Dorsolateral prefrontal cortex (tissue), 120 donors: ENCODE measurements at regions of chr5 and their contacts with region 1.

Region 1: DNA sequence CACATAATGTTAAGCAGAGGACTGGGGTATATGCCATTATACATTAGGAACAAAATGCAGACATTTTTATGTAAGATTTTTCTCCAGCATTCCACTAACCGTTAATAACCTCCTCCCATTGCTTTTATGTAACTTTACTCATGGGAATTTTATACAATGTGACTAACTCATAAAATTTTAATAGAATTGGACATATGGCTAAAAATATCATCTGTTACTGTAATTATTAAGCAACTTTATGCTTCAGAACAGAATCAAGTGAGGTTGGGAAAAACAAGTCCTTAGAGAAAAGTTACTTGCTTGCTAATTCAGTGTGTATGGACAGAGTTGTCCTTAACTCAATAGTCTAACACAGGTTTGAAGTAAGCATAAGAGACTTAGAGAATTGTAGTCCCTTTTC is 54.8 kb upstream of the PCSK1 start:
- DNase-seq: no peak
- H3K4me3 ChIP-seq: no peak overlapping the region
- H3K27ac ChIP-seq: no peak overlapping the region
- H3K27me3 ChIP-seq: no peaks in the 10 kb centered on the region
- CTCF ChIP-seq: no peak

Region 2: DNA sequence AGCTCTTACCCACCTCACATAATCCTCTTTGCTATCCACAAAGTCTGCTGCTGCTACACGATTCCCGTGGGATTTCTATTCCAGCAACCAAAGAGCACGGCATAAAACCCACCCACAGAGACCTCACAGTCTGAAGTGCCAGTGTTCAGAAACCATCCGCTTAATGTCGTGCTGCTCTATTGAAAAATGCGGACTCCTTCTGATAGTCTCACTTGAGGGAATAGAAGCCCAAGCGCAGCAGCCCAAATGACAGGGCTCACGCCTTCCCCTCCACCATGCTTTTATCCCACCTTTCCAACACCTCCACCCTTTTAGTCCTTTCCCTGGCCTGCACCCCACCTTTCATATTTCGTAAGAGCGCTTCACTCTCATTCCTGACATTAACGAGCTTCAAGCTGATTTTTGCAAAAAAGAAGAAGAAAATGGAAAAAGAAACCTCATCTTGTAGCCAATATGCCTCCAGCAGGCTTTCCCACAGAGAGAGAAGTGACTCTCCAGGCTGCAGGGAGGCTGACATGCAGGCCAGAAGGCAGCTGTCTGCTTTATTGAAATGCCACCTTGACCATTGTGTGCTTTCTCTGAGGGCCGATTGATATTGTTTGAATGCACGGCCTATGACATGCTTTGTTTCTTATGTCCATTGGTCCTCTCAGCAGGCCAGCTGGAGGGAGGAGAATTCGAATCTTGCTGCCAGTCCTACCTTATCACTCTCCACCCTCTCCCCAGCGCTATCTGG is 15.8 kb after region 1 on chr5:
- intact Hi-C with region 1: loop called in 1 of 2 experiments (anchors 2 kb)
- DNase-seq: no peak
- H3K4me3 ChIP-seq: no peak overlapping the region
- H3K27ac ChIP-seq: no peak overlapping the region
- H3K27me3 ChIP-seq: no peaks in the 10 kb centered on the region
- CTCF ChIP-seq: no peak